ENCODE measurements at regions of chr3 and their contacts with region 1.

Region 1: GRCh38 chr3:32733631-32734229 is 48.7 kb downstream of the CNOT10 start:
- DNase-seq: no peak
- H3K4me3 ChIP-seq: no peak overlapping the region
- H3K27ac ChIP-seq: no peak overlapping the region
- H3K4me1 ChIP-seq: no peaks in the 10 kb centered on the region
- H3K27me3 ChIP-seq: no peaks in the 10 kb centered on the region
- CTCF ChIP-seq: peak in 5 of 6 experiments; percentile 33 to 67 (median 49)
- POLR2A ChIP-seq: no peak

Region 2: GRCh38 chr3:32937331-32937730 is 203.6 kb after region 1 on chr3:
- intact Hi-C with region 1: loop called (anchors 5 kb)
- DNase-seq: no peak
- H3K4me3 ChIP-seq: no peak overlapping the region
- H3K27ac ChIP-seq: no peak overlapping the region
- H3K4me1 ChIP-seq: no peaks in the 10 kb centered on the region
- H3K27me3 ChIP-seq: no peaks in the 10 kb centered on the region
- CTCF ChIP-seq: no peak
- POLR2A ChIP-seq: no peak

Measured in esophagus squamous epithelium (tissue), 5 donors.